Activated T-helper 1 cell treated with anti-CD3 and anti-CD28 coated beads, Interleukin-12 subunit alpha, Interleukin-12 subunit beta, Interleukin-2, Interleukin-4 antibody, amounts not matched to agents 30 ng/mL and 10 ng/mL and 1 ng/mL, durations not matched to agents 14 hours and 24 hours and 36 hours (primary cell): ENCODE measurements at regions of chr1 and their contacts with region 1.

Region 1: GRCh38 chr1:36653850-36654249 is 171.1 kb upstream of the CSF3R start:
- DNase-seq: no peak
- H3K4me3 Mint-ChIP-seq: no peak overlapping the region
- H3K27ac Mint-ChIP-seq: no peak overlapping the region
- H3K4me1 Mint-ChIP-seq: peaks cover 7% of the 10 kb centered on the region
- H3K27me3 Mint-ChIP-seq: peaks cover 6% of the 10 kb centered on the region

Region 2: DNA sequence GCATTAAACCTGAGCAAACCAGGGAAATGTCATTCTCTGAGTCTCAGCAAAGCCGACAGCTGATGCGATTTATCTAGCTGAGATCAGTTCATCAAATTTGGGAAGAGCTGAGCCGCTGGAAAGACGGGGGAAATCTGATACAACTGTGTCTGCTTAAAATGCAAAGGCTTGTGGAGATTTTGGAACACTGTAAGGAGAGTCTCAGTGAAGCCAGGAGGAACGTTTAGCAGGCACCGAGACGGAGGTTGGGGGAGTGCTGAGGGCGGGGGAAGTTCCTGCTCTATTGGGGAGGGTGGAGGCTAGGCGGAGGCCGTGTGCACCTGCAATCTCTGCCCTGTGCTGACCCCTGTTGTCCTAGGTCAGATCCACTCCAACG is 27.9 kb before region 1 on chr1:
- intact Hi-C with region 1: loop called (anchors 1 kb)
- DNase-seq: no peak
- H3K4me3 Mint-ChIP-seq: no peak overlapping the region
- H3K27ac Mint-ChIP-seq: no peak overlapping the region
- H3K4me1 Mint-ChIP-seq: no peaks in the 10 kb centered on the region
- H3K27me3 Mint-ChIP-seq: peaks cover 9% of the 10 kb centered on the region